Activated B cell treated with CpG ODN at 0.5 μM for 24 hours (primary cell): ENCODE measurements at regions of chr5 and their contacts with region 1.

Region 1: DNA sequence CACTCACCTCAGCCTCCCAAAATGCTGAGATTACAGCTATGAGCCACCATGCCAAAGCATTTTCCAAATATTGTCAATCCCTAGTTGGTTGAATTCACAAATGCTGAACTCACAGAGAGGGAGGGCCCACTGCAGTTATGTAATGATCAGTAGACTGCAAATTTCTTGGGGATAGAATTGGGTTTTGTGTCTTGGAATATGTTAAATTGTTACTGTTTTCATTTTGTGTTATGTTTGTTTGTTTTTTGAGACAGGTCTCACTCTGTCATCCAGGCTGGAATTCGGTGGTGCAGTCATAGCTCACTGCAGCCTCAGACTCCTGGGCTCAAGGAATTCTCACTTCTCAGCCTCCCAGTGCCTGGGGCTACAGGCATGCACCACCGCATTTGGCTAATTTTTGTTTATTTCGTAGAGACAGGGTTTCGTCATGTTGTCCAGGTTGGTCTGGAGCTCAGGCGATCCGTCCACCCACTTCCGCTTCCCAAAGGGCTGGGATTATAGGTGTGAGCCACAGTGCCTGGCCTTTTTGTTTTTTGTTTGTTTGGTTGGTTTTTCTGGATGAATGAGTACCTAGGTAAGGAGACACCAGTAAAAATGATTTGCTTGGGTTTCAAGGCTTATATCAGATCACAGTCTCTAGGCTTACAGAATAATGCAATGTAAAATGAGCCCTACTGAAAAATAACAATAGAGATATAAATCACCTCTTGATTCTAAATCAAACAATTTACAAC is 31.5 kb upstream of the LMNB1 start:
- DNase-seq: no peak
- ATAC-seq: no peak
- H3K4me3 Mint-ChIP-seq: no peak overlapping the region
- H3K27ac Mint-ChIP-seq: no peak overlapping the region
- H3K4me1 Mint-ChIP-seq: peaks cover 19% of the 10 kb centered on the region
- H3K27me3 Mint-ChIP-seq: peaks cover 4% of the 10 kb centered on the region
- CTCF ChIP-seq: no peak

Region 2: GRCh38 chr5:126686451-126687126 is 58.8 kb before region 1 on chr5:
- CTCF ChIA-PET with region 1: no interaction called
- POLR2A ChIA-PET with region 1: no interaction called
- intact Hi-C with region 1: loop called (anchors 5 kb)
- DNase-seq: no peak
- ATAC-seq: peak; percentile 34
- H3K4me3 Mint-ChIP-seq: no peak overlapping the region
- H3K27ac Mint-ChIP-seq: no peak overlapping the region
- H3K4me1 Mint-ChIP-seq: peaks cover 13% of the 10 kb centered on the region
- H3K27me3 Mint-ChIP-seq: peaks cover 2% of the 10 kb centered on the region
- CTCF ChIP-seq: no peak

Region 3: DNA sequence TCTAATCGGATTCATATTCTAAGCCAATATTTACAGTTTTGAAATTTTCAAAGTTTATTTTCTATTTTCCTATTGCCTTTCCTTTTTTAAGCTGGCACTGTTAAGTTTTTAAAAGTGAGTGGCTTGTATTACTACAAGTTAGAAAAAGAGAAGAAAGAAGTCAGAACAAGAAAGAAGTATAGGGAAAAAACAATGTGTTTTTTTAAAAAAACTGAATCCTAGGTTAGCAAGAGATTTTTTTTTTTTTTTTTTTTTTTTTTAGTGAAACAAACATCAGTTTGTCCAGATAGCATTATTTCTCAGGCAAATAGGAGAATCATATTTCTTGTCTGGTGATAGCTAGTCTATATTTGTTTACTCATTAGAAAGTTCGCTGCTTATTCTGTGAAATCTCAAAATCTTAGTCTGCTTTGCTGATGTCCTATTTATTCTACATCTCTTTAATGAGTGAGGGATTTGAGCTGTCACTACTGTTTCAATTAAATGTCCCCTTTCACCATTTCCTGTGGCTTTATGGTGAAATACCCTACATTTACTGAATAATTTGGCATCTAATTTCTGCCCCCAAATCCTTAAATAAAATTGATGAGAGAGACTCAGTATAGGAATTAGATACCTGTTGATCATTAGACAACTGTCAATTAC is 12.4 kb after region 1 on chr5:
- CTCF ChIA-PET with region 1: no interaction called
- POLR2A ChIA-PET with region 1: no interaction called
- intact Hi-C with region 1: loop called (anchors 1 kb)
- DNase-seq: no peak
- ATAC-seq: no peak
- H3K4me3 Mint-ChIP-seq: peak overlapping the region; percentile 46
- H3K27ac Mint-ChIP-seq: peak overlapping the region; percentile 69
- H3K4me1 Mint-ChIP-seq: peaks cover 38% of the 10 kb centered on the region
- H3K27me3 Mint-ChIP-seq: no peaks in the 10 kb centered on the region
- CTCF ChIP-seq: no peak